OCI-LY7 (cell line): ENCODE measurements at regions of chr13 and their contacts with region 1.

Region 1: GRCh38 chr13:41061075-41061913 is at the start of gene WBP4:
- DNase-seq: peak; percentile 95
- H3K4me3 ChIP-seq: peak within 1 kb of the TSS; percentile 74
- H3K27ac ChIP-seq: peak within 1 kb of the TSS; percentile 83
- H3K4me1 ChIP-seq: peaks cover 48% of the 10 kb centered on the region
- CTCF ChIP-seq: no peak
- total RNA-seq, gene WBP4: 5.9 and 7.9 TPM in 2 replicates

Region 2: DNA sequence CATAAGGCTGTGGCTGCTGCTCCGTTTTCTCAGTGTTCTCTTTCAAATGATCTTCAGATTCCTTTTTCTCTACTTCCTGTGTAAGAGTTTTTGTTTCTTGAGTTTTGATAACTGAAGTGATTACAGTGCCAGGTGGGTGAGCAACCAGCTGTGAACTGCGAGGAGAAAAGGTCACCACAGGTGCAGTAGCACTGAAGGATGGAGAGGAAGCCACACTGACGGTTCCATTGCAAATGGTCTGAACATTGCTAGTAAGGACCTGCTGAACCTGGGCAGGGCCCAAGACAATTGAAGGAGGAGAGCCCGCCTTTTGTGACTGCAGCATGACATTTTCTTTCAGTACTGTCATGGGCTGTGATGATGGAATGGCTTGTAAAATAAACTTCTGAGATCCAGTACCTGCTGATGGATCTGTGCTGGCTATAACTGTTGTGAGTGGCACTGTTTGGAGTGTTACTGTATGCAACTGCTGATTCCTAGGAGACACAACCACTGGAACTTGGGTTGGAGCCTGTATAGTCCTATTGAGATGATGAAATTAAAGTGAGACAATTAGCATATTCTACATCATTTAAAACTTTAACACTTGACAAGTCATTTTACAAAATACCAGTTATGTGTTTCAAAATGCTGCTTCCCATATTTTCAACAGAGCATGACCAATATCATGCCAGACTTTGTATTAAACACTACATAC is 127.6 kb before region 1 on chr13:
- CTCF ChIA-PET with region 1: no interaction called
- POLR2A ChIA-PET with region 1: interaction called, 3 read pairs
- intact Hi-C with region 1: loop called (anchors 2 kb)
- DNase-seq: peak; percentile 97
- H3K4me3 ChIP-seq: peak overlapping the region; percentile 52
- H3K27ac ChIP-seq: peak overlapping the region; percentile 95
- H3K4me1 ChIP-seq: peaks cover 58% of the 10 kb centered on the region
- CTCF ChIP-seq: no peak

Region 3: DNA sequence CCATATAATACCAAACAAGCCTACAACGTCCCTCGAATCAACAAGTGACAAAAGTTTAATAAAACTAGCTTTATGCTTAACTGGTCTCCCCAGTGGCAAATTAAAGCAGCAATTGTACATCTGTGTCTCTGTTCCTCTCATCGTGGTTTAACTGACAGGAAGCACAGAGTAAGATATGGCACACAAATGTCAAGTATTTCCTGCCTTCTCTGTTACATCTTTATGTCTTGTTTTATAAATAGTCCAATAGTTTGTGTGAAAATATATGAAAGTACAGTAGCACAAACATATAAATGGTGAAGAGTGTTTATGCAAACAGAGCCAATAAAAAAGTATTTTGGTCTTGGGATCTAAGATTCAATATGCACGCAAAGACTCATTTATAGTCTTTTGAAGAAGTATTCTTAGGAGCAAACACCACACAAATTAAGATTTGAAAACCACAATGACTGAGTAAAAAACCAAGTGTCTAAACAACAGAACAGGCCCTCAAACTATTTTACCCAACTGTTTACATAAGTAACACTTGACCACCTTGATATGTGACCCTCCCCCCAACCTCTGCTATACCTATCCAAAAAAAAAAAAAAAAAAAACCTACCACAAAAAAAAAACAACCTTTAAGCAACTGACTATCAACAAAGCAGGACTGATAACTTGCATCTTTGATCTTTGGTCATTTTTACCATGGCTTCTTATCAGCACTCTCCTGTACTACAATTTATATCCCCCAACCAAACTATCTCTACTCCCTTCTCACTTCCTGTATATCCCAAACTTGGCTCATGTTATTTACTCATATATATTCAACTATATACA is 56.2 kb before region 1 on chr13:
- CTCF ChIA-PET with region 1: no interaction called
- POLR2A ChIA-PET with region 1: interaction called, 10 read pairs
- intact Hi-C with region 1: no loop called
- DNase-seq: peak; percentile 89
- H3K4me3 ChIP-seq: peak overlapping the region; percentile 64
- H3K27ac ChIP-seq: peak overlapping the region; percentile 99
- H3K4me1 ChIP-seq: peaks cover 95% of the 10 kb centered on the region
- CTCF ChIP-seq: no peak

Region 4: GRCh38 chr13:41132512-41133152 is 71.3 kb after region 1 on chr13 and contains the start of gene KBTBD6:
- CTCF ChIA-PET with region 1: no interaction called
- POLR2A ChIA-PET with region 1: no interaction called
- intact Hi-C with region 1: loop called (anchors 1 kb)
- DNase-seq: peak; percentile 97
- H3K4me3 ChIP-seq: peak within 1 kb of the TSS; percentile 84
- H3K27ac ChIP-seq: peak within 1 kb of the TSS; percentile 36
- H3K4me1 ChIP-seq: peaks cover 39% of the 10 kb centered on the region
- CTCF ChIP-seq: no peak
- total RNA-seq, gene KBTBD6: 11.1 and 11.6 TPM in 2 replicates

Region 5: GRCh38 chr13:41250993-41251392 is 189.7 kb after region 1 on chr13:
- CTCF ChIA-PET with region 1: no interaction called
- POLR2A ChIA-PET with region 1: no interaction called
- intact Hi-C with region 1: no loop called
- DNase-seq: no peak
- H3K4me3 ChIP-seq: no peak overlapping the region
- H3K27ac ChIP-seq: no peak overlapping the region
- H3K4me1 ChIP-seq: no peaks in the 10 kb centered on the region
- CTCF ChIP-seq: no peak

Region 6: GRCh38 chr13:41465241-41465847 is 404.1 kb after region 1 on chr13:
- CTCF ChIA-PET with region 1: no interaction called
- POLR2A ChIA-PET with region 1: interaction called, 4 read pairs
- intact Hi-C with region 1: loop called (anchors 5 kb)
- DNase-seq: peak; percentile 94
- H3K4me3 ChIP-seq: peak overlapping the region; percentile 85
- H3K27ac ChIP-seq: peak overlapping the region; percentile 95
- H3K4me1 ChIP-seq: peaks cover 71% of the 10 kb centered on the region
- CTCF ChIP-seq: no peak